ENCODE measurements at regions of chr2 and their contacts with region 1.

Region 1: GRCh38 chr2:190319555-190320498 is at the start of gene HIBCH:
- DNase-seq: peak; percentile 95
- ATAC-seq: peak; percentile 87
- H3K4me3 Mint-ChIP-seq: peak within 1 kb of the TSS; percentile 85
- H3K27ac Mint-ChIP-seq: peak within 1 kb of the TSS; percentile 93
- H3K4me1 Mint-ChIP-seq: peaks cover 59% of the 10 kb centered on the region
- H3K27me3 Mint-ChIP-seq: no peaks in the 10 kb centered on the region
- total RNA-seq, gene HIBCH: 23.1 to 23.7 TPM

Region 2: GRCh38 chr2:189440947-189441708 is 878.7 kb before region 1 on chr2 and contains the start of gene WDR75:
- CTCF ChIA-PET with region 1: no interaction called
- POLR2A ChIA-PET with region 1: no interaction called
- intact Hi-C with region 1: loop called in 1 of 2 experiments (anchors 5 kb)
- DNase-seq: peak; percentile 95
- ATAC-seq: peak; percentile 91
- H3K4me3 Mint-ChIP-seq: no peak within 1 kb of the TSS
- H3K27ac Mint-ChIP-seq: peak within 1 kb of the TSS; percentile 99
- H3K4me1 Mint-ChIP-seq: peaks cover 20% of the 10 kb centered on the region
- H3K27me3 Mint-ChIP-seq: no peaks in the 10 kb centered on the region
- total RNA-seq, gene WDR75: 82.1 to 82.3 TPM

Region 3: GRCh38 chr2:189783927-189784867 is 535.6 kb before region 1 on chr2 and contains the starts of genes ORMDL1 and PMS1:
- CTCF ChIA-PET with region 1: no interaction called
- POLR2A ChIA-PET with region 1: no interaction called
- intact Hi-C with region 1: loop called in 1 of 2 experiments (anchors 1 kb)
- DNase-seq: peak; percentile 96
- ATAC-seq: peak; percentile 92
- H3K4me3 Mint-ChIP-seq: peak within 1 kb of the TSS; percentile 74
- H3K27ac Mint-ChIP-seq: peak within 1 kb of the TSS; percentile 94
- H3K4me1 Mint-ChIP-seq: peaks cover 52% of the 10 kb centered on the region
- H3K27me3 Mint-ChIP-seq: no peaks in the 10 kb centered on the region
- total RNA-seq, gene ORMDL1: 45.2 to 49.2 TPM
- total RNA-seq, gene PMS1: 45.8 to 47.4 TPM

Region 4: DNA sequence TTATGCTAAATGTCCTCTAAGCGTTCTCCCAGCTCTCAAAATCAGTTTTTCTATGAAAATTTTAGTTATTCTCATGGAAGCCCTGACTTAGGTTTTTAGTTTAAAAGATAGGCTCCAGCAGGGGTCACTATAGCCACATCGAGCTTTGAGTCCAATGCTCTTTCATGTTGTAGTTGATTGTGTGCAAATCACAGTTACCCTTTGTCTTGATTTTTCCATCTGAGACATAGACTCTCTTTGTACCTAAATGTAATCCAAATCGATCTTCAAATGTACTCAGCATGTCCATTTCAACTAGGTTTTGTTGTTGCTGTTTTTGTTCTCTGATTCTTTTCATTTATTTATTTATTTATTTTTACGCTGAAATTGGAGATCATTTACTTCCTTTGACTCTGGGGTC is 230.9 kb before region 1 on chr2:
- CTCF ChIA-PET with region 1: interaction called, 8 read pairs
- POLR2A ChIA-PET with region 1: no interaction called
- intact Hi-C with region 1: loop called (anchors 2 kb)
- DNase-seq: peak; percentile 64
- ATAC-seq: peak; percentile 69
- H3K4me3 Mint-ChIP-seq: no peak overlapping the region
- H3K27ac Mint-ChIP-seq: no peak overlapping the region
- H3K4me1 Mint-ChIP-seq: no peaks in the 10 kb centered on the region
- H3K27me3 Mint-ChIP-seq: no peaks in the 10 kb centered on the region

Region 5: GRCh38 chr2:190343500-190344275 is 23.9 kb after region 1 on chr2 and contains the start of gene INPP1:
- CTCF ChIA-PET with region 1: interaction called, 4 read pairs
- POLR2A ChIA-PET with region 1: interaction called, 3 read pairs
- intact Hi-C with region 1: loop called (anchors 1 to 2 kb)
- DNase-seq: peak; percentile 63
- ATAC-seq: peak; percentile 71
- H3K4me3 Mint-ChIP-seq: peak within 1 kb of the TSS; percentile 66
- H3K27ac Mint-ChIP-seq: peak within 1 kb of the TSS; percentile 75
- H3K4me1 Mint-ChIP-seq: peaks cover 12% of the 10 kb centered on the region
- H3K27me3 Mint-ChIP-seq: no peaks in the 10 kb centered on the region
- total RNA-seq, gene INPP1: 6.7 to 7.8 TPM

Region 6: GRCh38 chr2:190376591-190377245 is 56.9 kb after region 1 on chr2:
- CTCF ChIA-PET with region 1: no interaction called
- POLR2A ChIA-PET with region 1: no interaction called
- intact Hi-C with region 1: loop called in 1 of 2 experiments (anchors 2 kb)
- DNase-seq: no peak
- ATAC-seq: no peak
- H3K4me3 Mint-ChIP-seq: no peak overlapping the region
- H3K27ac Mint-ChIP-seq: no peak overlapping the region
- H3K4me1 Mint-ChIP-seq: no peaks in the 10 kb centered on the region
- H3K27me3 Mint-ChIP-seq: no peaks in the 10 kb centered on the region

Region 7: GRCh38 chr2:190534310-190535120 is 214.7 kb after region 1 on chr2 and contains the start of gene NEMP2:
- CTCF ChIA-PET with region 1: interaction called, 6 read pairs
- POLR2A ChIA-PET with region 1: no interaction called
- intact Hi-C with region 1: loop called (anchors 1 to 5 kb)
- DNase-seq: peak; percentile 87
- ATAC-seq: peak; percentile 70
- H3K4me3 Mint-ChIP-seq: peak within 1 kb of the TSS; percentile 95
- H3K27ac Mint-ChIP-seq: peak within 1 kb of the TSS; percentile 98
- H3K4me1 Mint-ChIP-seq: peaks cover 52% of the 10 kb centered on the region
- H3K27me3 Mint-ChIP-seq: no peaks in the 10 kb centered on the region
- total RNA-seq, gene NEMP2: 24.6 to 25.1 TPM

Region 8: GRCh38 chr2:190736355-190736754 is 416.5 kb after region 1 on chr2:
- CTCF ChIA-PET with region 1: no interaction called
- POLR2A ChIA-PET with region 1: no interaction called
- intact Hi-C with region 1: no loop called
- DNase-seq: no peak
- ATAC-seq: no peak
- H3K4me3 Mint-ChIP-seq: no peak overlapping the region
- H3K27ac Mint-ChIP-seq: no peak overlapping the region
- H3K4me1 Mint-ChIP-seq: no peaks in the 10 kb centered on the region
- H3K27me3 Mint-ChIP-seq: no peaks in the 10 kb centered on the region

Region 9: GRCh38 chr2:192155511-192156118 is 1835.8 kb after region 1 on chr2:
- CTCF ChIA-PET with region 1: no interaction called
- POLR2A ChIA-PET with region 1: no interaction called
- intact Hi-C with region 1: no loop called
- DNase-seq: no peak
- ATAC-seq: no peak
- H3K4me3 Mint-ChIP-seq: no peak overlapping the region
- H3K27ac Mint-ChIP-seq: no peak overlapping the region
- H3K4me1 Mint-ChIP-seq: no peaks in the 10 kb centered on the region
- H3K27me3 Mint-ChIP-seq: peaks cover 5% of the 10 kb centered on the region

Measured in activated CD4-positive, alpha-beta T cell treated with anti-CD3 and anti-CD28 coated beads for 36 hours (primary cell).